Caco-2 (cell line): ENCODE measurements at regions of chr12 and their contacts with region 1.

Region 1: GRCh38 chr12:19198272-19198671 is 68.7 kb downstream of the PLEKHA5 start:
- DNase-seq: peak in 1 of 2 experiments; percentile 36
- H3K4me3 ChIP-seq: no peak overlapping the region
- H3K4me3 Mint-ChIP-seq: no peak overlapping the region
- H3K27ac Mint-ChIP-seq: no peak overlapping the region
- H3K4me1 ChIP-seq: peaks cover 12% of the 10 kb centered on the region
- H3K4me1 Mint-ChIP-seq: peaks cover 15% of the 10 kb centered on the region
- H3K27me3 ChIP-seq: no peaks in the 10 kb centered on the region
- H3K27me3 Mint-ChIP-seq: no peaks in the 10 kb centered on the region
- CTCF ChIP-seq: no peak

Region 2: GRCh38 chr12:19212245-19212644 is 14.0 kb after region 1 on chr12:
- CTCF ChIA-PET with region 1: no interaction called
- POLR2A ChIA-PET with region 1: no interaction called
- intact Hi-C with region 1: loop called (anchors 2 kb)
- DNase-seq: no peak
- H3K4me3 ChIP-seq: no peak overlapping the region
- H3K4me3 Mint-ChIP-seq: no peak overlapping the region
- H3K27ac Mint-ChIP-seq: no peak overlapping the region
- H3K4me1 ChIP-seq: peaks cover 5% of the 10 kb centered on the region; the same call in 1 of the 2 replicates
- H3K4me1 Mint-ChIP-seq: no peaks in the 10 kb centered on the region
- H3K27me3 ChIP-seq: no peaks in the 10 kb centered on the region
- H3K27me3 Mint-ChIP-seq: no peaks in the 10 kb centered on the region
- CTCF ChIP-seq: no peak

Region 3: DNA sequence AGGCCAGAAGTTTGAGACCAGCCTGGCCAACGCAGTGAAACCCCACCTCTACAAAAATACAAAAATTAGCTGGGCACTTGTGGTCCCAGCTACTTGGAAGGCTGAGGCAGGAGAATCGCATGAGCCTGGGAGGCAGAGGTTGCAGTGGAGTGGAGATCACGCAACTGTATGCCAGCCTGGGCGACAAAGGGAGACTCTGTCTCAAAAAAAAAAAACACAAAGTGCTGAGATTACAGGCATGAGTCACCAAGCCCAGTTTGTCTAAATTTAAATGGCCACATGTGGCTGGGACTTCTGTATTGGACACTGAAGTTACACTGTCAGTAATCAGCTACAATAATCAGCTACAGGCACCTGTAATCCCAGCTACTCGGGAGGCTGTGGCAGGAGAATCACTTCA is 140.1 kb after region 1 on chr12:
- CTCF ChIA-PET with region 1: no interaction called
- POLR2A ChIA-PET with region 1: no interaction called
- intact Hi-C with region 1: no loop called
- DNase-seq: no peak
- H3K4me3 ChIP-seq: no peak overlapping the region
- H3K4me3 Mint-ChIP-seq: no peak overlapping the region
- H3K27ac Mint-ChIP-seq: no peak overlapping the region
- H3K4me1 ChIP-seq: no peaks in the 10 kb centered on the region
- H3K4me1 Mint-ChIP-seq: no peaks in the 10 kb centered on the region
- H3K27me3 ChIP-seq: no peaks in the 10 kb centered on the region
- H3K27me3 Mint-ChIP-seq: no peaks in the 10 kb centered on the region
- CTCF ChIP-seq: no peak